Heart left ventricle (tissue), 16 donors: ENCODE measurements at regions of chr14 and their contacts with region 1.

Region 1: GRCh38 chr14:104639889-104640548 is 35.4 kb upstream of the TMEM179 start:
- DNase-seq: peak in 4 of 5 donors; percentile 43 to 63 (median 53)
- ATAC-seq: peak; percentile 54 to 89 (median 82)
- H3K4me3 ChIP-seq: no peak overlapping the region
- H3K27ac ChIP-seq: no peak overlapping the region
- H3K4me1 ChIP-seq: peaks cover 0 to 18% (median 0%) of the 10 kb centered on the region in 12 donors
- H3K27me3 ChIP-seq: peaks cover 0 to 27% (median 3%) of the 10 kb centered on the region in 9 donors
- CTCF ChIP-seq: peak; percentile 83 to 95 (median 89)
- POLR2A ChIP-seq: no peak

Region 2: DNA sequence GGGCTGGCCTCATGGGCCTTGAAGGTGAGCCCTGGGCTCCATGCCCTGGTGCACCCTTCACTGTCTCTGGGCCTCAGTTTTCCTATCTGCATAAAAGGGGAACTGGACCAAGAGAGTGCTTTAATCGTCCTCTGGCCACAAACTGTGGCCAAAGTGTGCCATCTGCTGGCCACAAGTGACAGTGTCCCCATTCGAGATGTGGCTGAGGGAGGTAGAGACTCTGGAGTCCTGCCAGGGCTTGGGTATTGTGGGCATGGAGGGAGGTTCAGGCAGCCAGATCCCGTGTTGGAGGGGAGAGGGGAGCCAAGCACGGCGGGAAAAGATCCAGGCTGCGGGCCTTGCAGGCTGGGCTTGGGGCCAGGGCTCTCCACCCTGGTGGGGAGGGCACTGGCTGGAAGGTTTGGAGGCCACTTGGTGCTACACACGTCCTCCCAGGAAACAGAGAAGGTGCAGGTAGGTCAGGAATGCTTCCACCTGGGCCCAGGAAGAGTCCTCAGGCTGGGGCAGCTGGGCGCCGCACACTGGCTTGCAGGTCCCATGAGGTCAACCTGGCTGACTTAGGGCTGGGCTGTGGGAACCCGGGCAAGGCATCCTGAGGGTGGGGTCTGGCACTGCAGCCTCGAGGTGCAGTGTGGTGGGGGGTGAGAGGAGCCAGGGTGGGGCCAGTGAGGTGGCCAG is 508.9 kb before region 1 on chr14:
- intact Hi-C with region 1: loop called (anchors 2 to 10 kb)
- DNase-seq: peak; percentile 66 to 81 (median 70)
- ATAC-seq: peak; percentile 59 to 80 (median 71)
- H3K4me3 ChIP-seq: no peak overlapping the region
- H3K27ac ChIP-seq: no peak overlapping the region
- H3K4me1 ChIP-seq: peaks cover 0 to 13% (median 5%) of the 10 kb centered on the region in 12 donors
- H3K27me3 ChIP-seq: peaks cover 0 to 32% (median 14%) of the 10 kb centered on the region in 9 donors
- CTCF ChIP-seq: peak; percentile 37 to 74 (median 65)
- POLR2A ChIP-seq: no peak

Region 3: DNA sequence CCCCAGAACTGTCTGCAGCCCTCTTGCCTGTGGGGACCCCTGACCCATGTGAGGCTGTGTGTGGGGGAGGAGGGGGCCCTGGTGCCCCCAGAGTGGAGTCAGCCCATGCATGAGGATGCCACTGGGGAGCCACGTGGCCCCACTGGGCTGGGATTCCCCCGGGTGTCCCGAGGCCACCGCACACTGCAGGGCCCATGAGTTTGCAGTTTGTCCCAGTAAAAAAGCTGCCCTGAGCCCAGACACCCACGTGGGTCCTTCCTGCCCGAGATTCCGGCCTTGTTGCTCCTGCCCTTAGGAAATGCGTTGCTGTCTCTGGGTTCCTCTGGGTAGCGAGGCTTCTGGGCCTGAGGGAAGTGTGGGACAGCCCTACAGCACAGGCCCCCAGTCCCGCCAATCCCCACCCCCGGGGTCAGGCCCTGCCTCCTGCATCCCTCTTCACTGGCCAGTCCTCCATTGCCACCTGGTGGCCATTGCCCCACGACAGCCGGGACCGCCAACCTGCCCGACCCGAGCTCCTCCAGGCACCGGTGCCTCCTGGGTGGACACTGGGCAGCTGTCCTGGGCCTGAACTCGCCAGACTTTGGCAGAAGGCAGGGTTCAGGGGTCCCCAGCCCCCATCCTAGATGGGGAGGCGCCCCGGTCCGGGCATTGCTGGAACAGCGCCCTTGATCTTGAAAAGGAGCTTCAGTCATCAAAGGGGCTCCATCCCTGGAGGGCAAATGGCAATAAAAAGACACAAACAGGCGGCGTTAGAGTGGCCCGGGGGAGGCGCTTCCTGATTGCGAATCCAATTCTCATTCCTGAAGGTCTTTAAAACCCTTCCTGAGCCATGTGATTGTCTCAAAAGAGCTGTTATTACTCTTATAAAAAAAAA is 76.0 kb before region 1 on chr14:
- intact Hi-C with region 1: loop called in 4 of 10 experiments (anchors 5 kb)
- DNase-seq: peak; percentile 70 to 86 (median 78)
- ATAC-seq: peak; percentile 44 to 88 (median 80)
- H3K4me3 ChIP-seq: no peak overlapping the region
- H3K27ac ChIP-seq: no peak overlapping the region
- H3K4me1 ChIP-seq: peaks cover 0 to 23% (median 12%) of the 10 kb centered on the region in 12 donors
- H3K27me3 ChIP-seq: peaks cover 0 to 44% (median 4%) of the 10 kb centered on the region in 9 donors
- CTCF ChIP-seq: peak; percentile 67 to 91 (median 86)
- POLR2A ChIP-seq: no peak